CD14-positive monocyte (primary cell): ENCODE measurements at regions of chr22 and their contacts with region 1.

Region 1: DNA sequence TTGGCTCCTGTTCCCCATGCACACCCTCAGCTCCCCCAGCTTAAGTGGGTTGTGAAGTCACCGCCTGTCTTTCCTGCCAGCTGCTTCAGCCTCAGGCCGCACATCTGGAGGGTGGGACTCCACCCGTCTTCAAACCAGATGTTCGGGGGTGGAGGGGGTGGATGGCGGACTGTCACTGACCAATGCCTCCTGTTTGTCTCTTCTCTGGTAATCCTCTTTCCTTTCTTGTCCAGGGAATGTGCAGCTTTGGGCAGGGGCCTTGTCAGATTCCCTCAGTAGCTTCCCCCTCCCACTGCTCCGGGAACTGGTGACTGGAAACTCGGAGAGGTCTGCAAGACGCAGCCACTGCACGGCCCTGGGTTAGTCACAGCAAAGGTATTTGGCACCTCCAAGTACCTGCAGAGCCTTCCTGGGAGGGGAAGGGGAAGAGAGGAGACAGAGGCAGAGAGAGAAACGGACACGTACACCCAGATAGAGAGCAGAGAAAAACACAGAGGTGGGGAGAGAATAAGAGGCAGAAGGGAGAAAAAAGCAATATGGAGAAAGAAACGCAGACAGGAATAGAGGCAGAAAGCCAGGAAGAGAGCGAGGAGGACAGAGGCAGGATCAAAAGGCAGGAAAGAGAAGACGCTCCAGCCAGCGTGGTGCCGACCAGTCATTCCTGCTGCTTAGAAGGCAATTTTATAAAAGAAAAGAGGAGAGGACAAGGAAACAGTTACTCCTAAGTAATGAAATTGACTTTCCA is 56.1 kb upstream of the TIMP3 start:
- DNase-seq: no peak
- H3K4me3 ChIP-seq: no peak overlapping the region
- H3K4me3 Mint-ChIP-seq: no peak overlapping the region
- H3K27ac ChIP-seq: no peak overlapping the region
- H3K27ac Mint-ChIP-seq: no peak overlapping the region
- H3K4me1 ChIP-seq: no peaks in the 10 kb centered on the region
- H3K4me1 Mint-ChIP-seq: no peaks in the 10 kb centered on the region
- H3K27me3 ChIP-seq: no peaks in the 10 kb centered on the region
- H3K27me3 Mint-ChIP-seq: peaks cover 7 to 14% (median 10%) of the 10 kb centered on the region in 3 donors
- CTCF ChIP-seq: no peak

Region 2: GRCh38 chr22:32684822-32685187 is 60.6 kb before region 1 on chr22:
- intact Hi-C with region 1: loop called in 1 of 2 experiments (anchors 10 kb)
- DNase-seq: no peak
- H3K4me3 ChIP-seq: no peak overlapping the region
- H3K4me3 Mint-ChIP-seq: no peak overlapping the region
- H3K27ac ChIP-seq: no peak overlapping the region
- H3K27ac Mint-ChIP-seq: no peak overlapping the region
- H3K4me1 ChIP-seq: no peaks in the 10 kb centered on the region
- H3K4me1 Mint-ChIP-seq: no peaks in the 10 kb centered on the region
- H3K27me3 ChIP-seq: peaks cover 0 to 7% of the 10 kb centered on the region in 2 donors
- H3K27me3 Mint-ChIP-seq: peaks cover 4 to 9% (median 8%) of the 10 kb centered on the region in 3 donors
- CTCF ChIP-seq: no peak